ENCODE measurements at regions of chr19 and their contacts with region 1.

Region 1: GRCh38 chr19:5803752-5804515 is 933 bp upstream of the NRTN start:
- DNase-seq: peak; percentile 94
- H3K4me3 ChIP-seq: peak overlapping the region; percentile 32
- H3K27ac ChIP-seq: no peak overlapping the region
- H3K4me1 ChIP-seq: peaks cover 4% of the 10 kb centered on the region
- H3K27me3 ChIP-seq: no peaks in the 10 kb centered on the region
- CTCF ChIP-seq: peak; percentile 86

Region 2: DNA sequence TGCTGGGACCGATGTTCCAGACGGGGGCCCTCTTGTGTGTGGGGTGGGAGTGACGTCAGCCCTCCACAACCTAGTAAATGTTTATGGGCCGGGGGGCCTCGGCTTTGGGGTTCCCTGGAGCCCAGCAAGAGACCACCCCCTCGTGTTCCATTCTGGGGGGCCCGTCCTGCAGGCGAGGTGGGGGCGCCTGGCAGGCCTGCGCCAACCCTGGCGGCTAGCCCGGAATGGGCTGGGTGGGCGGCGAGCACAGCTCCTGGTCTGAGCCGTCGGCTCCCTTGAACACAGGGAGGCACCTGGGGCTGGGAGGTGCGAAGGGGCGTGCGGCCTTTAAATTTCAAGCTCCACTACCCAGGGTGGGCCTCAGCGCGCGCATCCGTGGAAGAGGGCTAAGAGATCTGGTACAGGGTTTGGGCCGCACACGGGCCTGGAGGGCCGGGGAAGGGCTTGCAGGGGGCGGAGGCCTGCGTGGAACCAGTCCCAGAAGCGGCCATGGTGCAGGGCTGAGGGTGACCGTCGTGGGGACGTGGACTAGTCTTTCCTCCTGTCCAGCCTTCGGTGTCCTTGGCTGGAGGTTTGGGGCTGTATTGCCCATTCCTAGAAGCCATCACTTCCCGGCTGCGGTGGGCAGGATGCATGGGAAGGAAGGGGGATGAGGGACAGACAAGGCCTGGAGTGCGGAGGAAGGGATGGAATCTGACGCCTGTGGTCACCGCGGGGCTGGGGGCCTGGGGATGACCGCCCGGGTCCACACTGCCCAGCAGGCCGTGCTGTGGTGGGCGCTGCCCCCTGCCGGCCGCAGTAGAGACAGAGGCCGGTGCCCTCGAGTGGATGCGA is 88.2 kb after region 1 on chr19:
- intact Hi-C with region 1: loop called (anchors 2 kb)
- DNase-seq: peak; percentile 48
- H3K4me3 ChIP-seq: no peak overlapping the region
- H3K27ac ChIP-seq: no peak overlapping the region
- H3K4me1 ChIP-seq: no peaks in the 10 kb centered on the region
- H3K27me3 ChIP-seq: peaks cover 5% of the 10 kb centered on the region
- CTCF ChIP-seq: peak; percentile 60

Region 3: GRCh38 chr19:6021878-6022569 is 218.1 kb after region 1 on chr19:
- intact Hi-C with region 1: loop called (anchors 10 kb)
- DNase-seq: peak; percentile 80
- H3K4me3 ChIP-seq: no peak overlapping the region
- H3K27ac ChIP-seq: no peak overlapping the region
- H3K4me1 ChIP-seq: no peaks in the 10 kb centered on the region
- H3K27me3 ChIP-seq: no peaks in the 10 kb centered on the region
- CTCF ChIP-seq: peak; percentile 71